ENCODE measurements at regions of chr5 and their contacts with region 1.

Region 1: GRCh38 chr5:154857530-154858296 is 714 bp upstream of the CNOT8 start:
- DNase-seq: peak; percentile 93
- H3K4me3 ChIP-seq: peak overlapping the region; percentile 97
- H3K27ac ChIP-seq: peak overlapping the region; percentile 89
- H3K4me1 ChIP-seq: peaks cover 34% of the 10 kb centered on the region
- CTCF ChIP-seq: no peak

Region 2: DNA sequence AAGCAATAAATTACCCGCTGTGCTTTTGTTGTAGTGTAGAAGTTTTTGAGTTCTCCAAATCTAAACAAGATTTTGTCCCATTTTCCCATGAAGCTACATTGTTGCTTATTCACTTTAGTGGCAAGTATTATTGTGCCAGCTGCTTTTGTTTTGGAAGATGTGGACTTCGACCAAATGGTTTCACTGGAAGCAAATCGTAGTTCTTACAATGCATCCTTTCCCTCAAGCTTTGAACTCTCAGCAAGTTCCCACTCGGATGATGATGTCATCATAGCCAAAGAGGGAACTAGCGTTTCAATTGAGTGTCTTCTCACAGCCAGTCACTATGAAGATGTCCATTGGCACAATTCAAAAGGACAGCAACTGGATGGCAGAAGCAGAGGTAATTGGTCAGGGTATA is 808.1 kb before region 1 on chr5:
- CTCF ChIA-PET with region 1: no interaction called
- POLR2A ChIA-PET with region 1: no interaction called
- intact Hi-C with region 1: no loop called
- DNase-seq: no peak
- H3K4me3 ChIP-seq: no peak overlapping the region
- H3K27ac ChIP-seq: no peak overlapping the region
- H3K4me1 ChIP-seq: no peaks in the 10 kb centered on the region
- CTCF ChIP-seq: no peak

Region 3: DNA sequence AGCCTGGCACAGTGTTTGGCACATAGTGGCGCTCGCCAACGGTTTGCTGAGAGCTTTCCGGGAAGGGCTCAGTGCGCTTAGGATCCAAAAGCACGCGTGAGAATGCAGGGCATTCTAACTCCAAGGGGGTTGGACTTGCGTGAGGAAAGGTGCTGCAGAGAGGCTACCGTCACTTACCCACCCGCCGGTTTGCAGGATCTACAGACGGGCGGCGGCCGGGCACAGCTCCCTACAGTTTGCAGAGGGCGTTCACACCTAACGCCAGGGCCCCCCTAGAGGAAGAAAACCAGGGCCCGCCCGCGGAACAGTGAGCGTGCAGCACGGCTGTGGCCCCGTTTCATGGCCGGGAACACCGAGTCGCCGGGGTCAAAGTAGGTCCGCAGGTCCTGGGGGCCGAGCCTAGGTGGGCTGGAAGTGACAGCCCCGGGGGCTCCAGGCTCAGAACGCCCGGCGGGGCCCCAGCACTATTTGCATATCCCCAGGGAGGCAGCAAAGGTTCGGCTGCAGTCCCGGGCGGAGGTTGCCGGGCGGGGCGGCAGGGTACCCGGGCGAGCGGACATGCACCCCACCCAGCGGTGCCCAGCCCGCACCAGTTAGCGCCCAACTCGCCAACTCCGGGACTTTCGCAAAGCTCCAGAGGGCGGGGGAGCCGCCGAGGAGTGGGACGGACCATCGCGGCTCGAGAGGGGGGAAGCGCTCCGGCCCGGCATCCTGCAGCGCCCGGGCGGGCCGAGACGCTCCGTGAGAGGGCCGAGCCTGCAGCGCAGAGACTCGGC is 667.7 kb before region 1 on chr5:
- CTCF ChIA-PET with region 1: no interaction called
- POLR2A ChIA-PET with region 1: no interaction called
- intact Hi-C with region 1: loop called (anchors 2 kb)
- DNase-seq: peak; percentile 90
- H3K4me3 ChIP-seq: peak overlapping the region; percentile 83
- H3K27ac ChIP-seq: peak overlapping the region; percentile 75
- H3K4me1 ChIP-seq: peaks cover 25% of the 10 kb centered on the region
- CTCF ChIP-seq: peak; percentile 73

Region 4: GRCh38 chr5:154445422-154446182 is 412.1 kb before region 1 on chr5 and contains the start of gene SAP30L:
- CTCF ChIA-PET with region 1: no interaction called
- POLR2A ChIA-PET with region 1: no interaction called
- intact Hi-C with region 1: loop called (anchors 5 kb)
- DNase-seq: peak; percentile 96
- H3K4me3 ChIP-seq: peak within 1 kb of the TSS; percentile 78
- H3K27ac ChIP-seq: peak within 1 kb of the TSS; percentile 18
- H3K4me1 ChIP-seq: peaks cover 15% of the 10 kb centered on the region
- CTCF ChIP-seq: no peak
- total RNA-seq, gene SAP30L: 33.2 and 38.7 TPM in 2 replicates

Region 5: DNA sequence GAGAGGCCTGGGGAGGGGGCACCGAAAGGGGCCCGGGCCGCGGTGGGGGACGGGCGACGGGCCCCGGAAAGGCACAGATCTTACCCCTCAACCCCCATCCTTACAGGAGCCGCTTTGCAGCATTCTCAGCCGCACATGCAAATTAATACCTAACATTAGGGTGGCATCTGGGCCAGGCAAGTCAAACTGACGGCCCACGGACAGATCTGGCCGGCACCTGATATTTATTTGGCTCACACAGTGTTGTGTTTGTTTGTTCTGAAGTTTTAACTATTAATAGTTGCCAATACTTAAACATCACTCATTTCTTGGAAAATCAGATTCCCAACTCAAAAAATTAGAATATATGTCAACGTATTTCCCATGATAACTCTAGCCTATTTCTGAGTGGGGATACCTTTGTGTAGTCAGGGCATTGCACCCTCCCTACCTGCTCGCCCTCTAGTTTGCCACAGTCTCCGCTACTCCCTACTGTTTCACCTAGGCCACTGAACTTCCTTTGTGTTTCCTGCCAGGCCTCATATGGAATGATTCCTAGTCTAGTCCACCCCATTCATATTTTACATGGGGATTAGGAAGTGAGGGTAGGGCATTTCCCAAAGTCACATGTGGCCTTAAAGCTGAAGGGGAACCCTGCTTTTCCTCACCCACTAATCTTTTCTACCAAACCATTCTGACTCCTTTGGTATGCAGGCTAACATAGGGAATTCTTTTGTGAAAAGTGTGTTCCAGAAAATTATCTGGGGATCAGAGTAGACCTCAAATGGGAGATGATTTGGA is 174.4 kb before region 1 on chr5:
- CTCF ChIA-PET with region 1: no interaction called
- POLR2A ChIA-PET with region 1: interaction called, 3 read pairs
- intact Hi-C with region 1: loop called (anchors 2 kb)
- DNase-seq: peak; percentile 70
- H3K4me3 ChIP-seq: peak overlapping the region; percentile 67
- H3K27ac ChIP-seq: peak overlapping the region; percentile 78
- H3K4me1 ChIP-seq: peaks cover 21% of the 10 kb centered on the region
- CTCF ChIP-seq: no peak

Region 6: GRCh38 chr5:154940772-154941620 is 83.3 kb after region 1 on chr5 and contains the start of gene MRPL22:
- CTCF ChIA-PET with region 1: no interaction called
- POLR2A ChIA-PET with region 1: no interaction called
- intact Hi-C with region 1: loop called (anchors 2 kb)
- DNase-seq: peak; percentile 94
- H3K4me3 ChIP-seq: peak within 1 kb of the TSS; percentile 95
- H3K27ac ChIP-seq: peak within 1 kb of the TSS; percentile 72
- H3K4me1 ChIP-seq: peaks cover 47% of the 10 kb centered on the region
- CTCF ChIP-seq: no peak
- total RNA-seq, gene MRPL22: 34.0 and 48.9 TPM in 2 replicates

Measured in OCI-LY7 (cell line).